ENCODE measurements at regions of chr1 and their contacts with region 1.

Region 1: DNA sequence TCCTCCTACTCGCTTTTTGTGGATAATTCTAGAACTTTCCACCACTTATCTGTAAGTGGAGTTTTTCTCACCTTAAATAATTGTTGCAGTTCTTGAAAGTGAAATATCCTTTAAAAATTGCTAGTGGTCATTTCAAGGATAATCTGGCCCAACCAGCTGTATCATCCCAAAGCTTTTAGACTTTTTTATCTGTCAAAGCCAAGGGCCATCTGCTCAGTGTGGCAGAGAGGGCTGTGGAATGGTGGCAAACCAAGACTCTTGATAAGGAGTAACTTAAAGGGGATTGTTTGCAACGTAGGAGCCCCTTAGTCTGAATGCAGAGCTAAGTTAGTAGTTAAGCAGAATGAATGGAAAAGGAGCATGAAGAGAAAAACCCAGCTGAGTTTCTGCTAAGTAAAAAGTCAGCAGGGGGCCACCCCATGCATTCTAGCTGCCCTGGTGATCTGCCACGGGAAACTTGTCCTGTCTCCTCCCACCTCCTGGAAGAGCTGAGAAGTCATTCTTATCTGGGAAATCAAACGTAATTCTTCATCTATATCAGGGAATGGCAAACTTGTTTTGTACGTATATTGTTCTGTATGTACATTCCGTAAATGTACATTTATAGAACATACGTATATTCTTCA is 169.3 kb downstream of the PRDM2 start:
- DNase-seq: no peak
- H3K4me3 ChIP-seq: no peak overlapping the region
- H3K27ac ChIP-seq: no peak overlapping the region
- H3K4me1 ChIP-seq: no peaks in the 10 kb centered on the region
- H3K27me3 ChIP-seq: peaks cover 8% of the 10 kb centered on the region
- CTCF ChIP-seq: no peak
- EP300 ChIP-seq: no peak
- POLR2A ChIP-seq: no peak

Region 2: DNA sequence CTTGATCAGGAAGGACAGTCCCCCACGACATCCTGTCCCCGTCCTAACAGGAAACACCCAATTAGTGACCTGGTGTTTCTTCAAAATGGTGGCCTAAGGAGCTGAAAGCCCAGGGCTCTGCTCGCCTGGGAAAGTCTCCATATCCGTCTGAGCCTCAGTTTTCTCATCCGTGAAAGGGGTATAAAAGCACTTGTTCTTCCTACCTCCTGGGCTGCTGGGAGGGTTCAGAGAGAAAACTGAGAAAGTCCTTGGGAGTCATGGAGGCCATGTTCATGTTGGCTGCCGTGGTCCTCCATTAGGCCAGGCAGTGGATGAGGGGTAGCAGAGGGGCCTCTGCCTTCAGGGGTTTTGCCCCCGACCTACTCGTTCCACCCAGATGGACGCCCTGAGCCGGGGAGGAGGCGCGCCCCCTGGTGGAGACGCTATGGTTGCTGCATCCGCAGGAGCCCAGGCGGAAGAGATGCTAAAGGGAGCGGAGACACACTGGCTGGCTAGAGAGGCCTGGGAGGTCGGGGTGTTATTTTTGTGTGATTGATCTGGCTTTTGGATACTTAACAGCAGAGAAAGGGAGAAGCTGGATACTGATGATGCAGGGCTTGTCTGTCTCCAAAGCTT is 55.8 kb before region 1 on chr1:
- in situ Hi-C with region 1: no loop called
- intact Hi-C with region 1: no loop called
- DNase-seq: no peak
- H3K4me3 ChIP-seq: no peak overlapping the region
- H3K27ac ChIP-seq: no peak overlapping the region
- H3K4me1 ChIP-seq: peaks cover 0 to 7% (median 0%) of the 10 kb centered on the region in 4 donors
- H3K27me3 ChIP-seq: no peaks in the 10 kb centered on the region
- CTCF ChIP-seq: peak; percentile 17 to 48 (median 36)
- EP300 ChIP-seq: no peak
- POLR2A ChIP-seq: no peak

Region 3: DNA sequence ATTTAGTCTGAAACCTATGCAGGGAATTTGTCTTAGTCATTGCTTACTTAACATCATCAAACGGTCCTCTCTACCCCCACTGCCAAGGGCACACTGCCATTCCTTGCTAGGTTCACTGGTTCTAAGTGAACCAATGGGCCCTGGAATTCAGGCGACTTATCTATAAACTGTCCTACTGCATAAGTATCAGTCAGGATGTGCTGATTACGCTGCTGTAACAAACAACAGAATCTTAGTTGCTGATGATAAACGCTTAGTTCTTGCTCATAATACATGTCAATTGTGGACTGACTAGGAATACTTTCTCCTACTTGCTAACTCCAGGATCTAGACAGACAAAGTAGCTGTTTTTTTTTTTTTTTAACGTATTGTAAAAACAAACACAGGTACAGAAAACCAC is 33.1 kb before region 1 on chr1:
- in situ Hi-C with region 1: no loop called
- intact Hi-C with region 1: loop called (anchors 2 kb)
- DNase-seq: no peak
- H3K4me3 ChIP-seq: no peak overlapping the region
- H3K27ac ChIP-seq: no peak overlapping the region
- H3K4me1 ChIP-seq: peaks cover 0 to 12% (median 10%) of the 10 kb centered on the region in 4 donors
- H3K27me3 ChIP-seq: peaks cover 9% of the 10 kb centered on the region
- CTCF ChIP-seq: no peak
- EP300 ChIP-seq: no peak
- POLR2A ChIP-seq: no peak